HCT116 (cell line): ENCODE measurements at regions of chr15 and their contacts with region 1.

Region 1: GRCh38 chr15:57527382-57528091 is 64.2 kb upstream of the MYZAP start:
- DNase-seq: peak; percentile 61
- ATAC-seq: peak; percentile 88
- H3K4me3 ChIP-seq: no peak overlapping the region
- H3K27ac ChIP-seq: no peak overlapping the region
- H3K4me1 ChIP-seq: peaks cover 0 to 3% of the 10 kb centered on the region in 2 experiments; a peak in 1 of 4 replicates
- H3K27me3 ChIP-seq: no peaks in the 10 kb centered on the region
- CTCF ChIP-seq: peak; percentile 41 to 79 (median 70)
- POLR2A ChIP-seq: no peak
- RAD21 ChIP-seq: peak; percentile 87

Region 2: GRCh38 chr15:56491110-56491722 is 1036.3 kb before region 1 on chr15:
- CTCF ChIA-PET with region 1: interaction called, 11 read pairs
- POLR2A ChIA-PET with region 1: no interaction called
- RAD21 ChIA-PET with region 1: no interaction called
- intact Hi-C with region 1: loop called (anchors 1 kb)
- DNase-seq: peak; percentile 71
- ATAC-seq: peak; percentile 90
- H3K4me3 ChIP-seq: no peak overlapping the region
- H3K27ac ChIP-seq: no peak overlapping the region
- H3K4me1 ChIP-seq: peaks cover 0 to 4% of the 10 kb centered on the region in 2 experiments; a peak in 3 of 4 replicates
- H3K27me3 ChIP-seq: no peaks in the 10 kb centered on the region
- CTCF ChIP-seq: peak; percentile 51 to 94 (median 92); a peak in 5 of 6 replicates
- POLR2A ChIP-seq: no peak
- RAD21 ChIP-seq: peak; percentile 80

Region 3: DNA sequence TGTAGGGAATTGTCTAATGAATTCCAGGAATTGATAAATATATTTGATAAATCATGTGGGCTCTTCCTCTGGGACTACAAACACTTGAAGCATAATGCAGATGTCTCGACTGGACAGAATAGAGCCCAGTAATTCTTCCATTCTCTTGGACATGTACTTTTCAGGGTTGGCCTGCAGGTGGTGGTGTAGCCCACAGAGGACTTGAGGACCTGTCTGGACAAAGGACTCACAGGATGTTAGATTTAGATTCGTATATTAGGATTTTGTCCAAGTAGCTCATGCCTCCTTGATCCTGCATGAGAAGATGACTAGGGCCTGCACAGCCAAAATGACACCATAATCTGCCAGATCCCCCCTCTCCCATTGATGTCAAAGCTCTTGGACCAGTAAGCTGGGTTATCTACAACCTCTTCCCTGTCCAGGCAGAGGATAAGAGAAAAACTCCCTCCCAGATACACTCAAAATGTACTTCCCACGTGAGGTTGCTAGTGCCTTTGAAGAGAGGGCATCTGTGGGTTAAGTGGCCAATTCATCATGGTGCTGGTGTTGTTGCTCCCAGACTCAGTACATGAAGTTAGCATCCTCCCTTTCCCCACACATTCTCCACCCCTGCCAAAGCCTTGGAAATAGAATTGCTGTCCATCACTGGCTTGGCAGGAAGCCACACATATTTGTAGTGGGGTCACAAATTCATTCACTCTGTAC is 705.7 kb before region 1 on chr15:
- CTCF ChIA-PET with region 1: interaction called, 10 read pairs
- POLR2A ChIA-PET with region 1: no interaction called
- RAD21 ChIA-PET with region 1: no interaction called
- intact Hi-C with region 1: loop called (anchors 5 kb)
- DNase-seq: peak; percentile 48
- ATAC-seq: peak; percentile 91
- H3K4me3 ChIP-seq: no peak overlapping the region
- H3K27ac ChIP-seq: no peak overlapping the region
- H3K4me1 ChIP-seq: peaks cover 18 to 28% of the 10 kb centered on the region in 2 experiments
- H3K27me3 ChIP-seq: no peaks in the 10 kb centered on the region
- CTCF ChIP-seq: peak; percentile 56 to 73 (median 73); a peak in 5 of 6 replicates
- POLR2A ChIP-seq: no peak
- RAD21 ChIP-seq: peak; percentile 85

Region 4: GRCh38 chr15:57146506-57147201 is 380.9 kb before region 1 on chr15:
- CTCF ChIA-PET with region 1: interaction called, 37 read pairs
- POLR2A ChIA-PET with region 1: no interaction called
- RAD21 ChIA-PET with region 1: no interaction called
- intact Hi-C with region 1: loop called (anchors 5 kb)
- DNase-seq: peak; percentile 8
- ATAC-seq: no peak
- H3K4me3 ChIP-seq: no peak overlapping the region
- H3K27ac ChIP-seq: no peak overlapping the region
- H3K4me1 ChIP-seq: no peaks in the 10 kb centered on the region
- H3K27me3 ChIP-seq: no peaks in the 10 kb centered on the region
- CTCF ChIP-seq: peak; percentile 44 to 67 (median 48); a peak in 5 of 6 replicates
- POLR2A ChIP-seq: no peak
- RAD21 ChIP-seq: peak; percentile 62

Region 5: GRCh38 chr15:57375827-57376695 is 151.5 kb before region 1 on chr15 and contains the start of gene CGNL1:
- CTCF ChIA-PET with region 1: interaction called, 10 read pairs
- POLR2A ChIA-PET with region 1: no interaction called
- RAD21 ChIA-PET with region 1: interaction called in 1 of 2 experiments, 4 read pairs
- intact Hi-C with region 1: no loop called
- DNase-seq: no peak
- ATAC-seq: peak; percentile 86
- H3K4me3 ChIP-seq: peak within 1 kb of the TSS; percentile 40 to 55
- H3K27ac ChIP-seq: no peak within 1 kb of the TSS; the same call in 1 of the 2 replicates
- H3K4me1 ChIP-seq: peaks cover 5 to 12% of the 10 kb centered on the region in 2 experiments; a peak in 3 of 4 replicates
- H3K27me3 ChIP-seq: no peaks in the 10 kb centered on the region
- CTCF ChIP-seq: no peak
- POLR2A ChIP-seq: no peak
- RAD21 ChIP-seq: no peak
- total RNA-seq, gene CGNL1: 2.2 TPM